ENCODE measurements at regions of chr9 and their contacts with region 1.

Region 1: DNA sequence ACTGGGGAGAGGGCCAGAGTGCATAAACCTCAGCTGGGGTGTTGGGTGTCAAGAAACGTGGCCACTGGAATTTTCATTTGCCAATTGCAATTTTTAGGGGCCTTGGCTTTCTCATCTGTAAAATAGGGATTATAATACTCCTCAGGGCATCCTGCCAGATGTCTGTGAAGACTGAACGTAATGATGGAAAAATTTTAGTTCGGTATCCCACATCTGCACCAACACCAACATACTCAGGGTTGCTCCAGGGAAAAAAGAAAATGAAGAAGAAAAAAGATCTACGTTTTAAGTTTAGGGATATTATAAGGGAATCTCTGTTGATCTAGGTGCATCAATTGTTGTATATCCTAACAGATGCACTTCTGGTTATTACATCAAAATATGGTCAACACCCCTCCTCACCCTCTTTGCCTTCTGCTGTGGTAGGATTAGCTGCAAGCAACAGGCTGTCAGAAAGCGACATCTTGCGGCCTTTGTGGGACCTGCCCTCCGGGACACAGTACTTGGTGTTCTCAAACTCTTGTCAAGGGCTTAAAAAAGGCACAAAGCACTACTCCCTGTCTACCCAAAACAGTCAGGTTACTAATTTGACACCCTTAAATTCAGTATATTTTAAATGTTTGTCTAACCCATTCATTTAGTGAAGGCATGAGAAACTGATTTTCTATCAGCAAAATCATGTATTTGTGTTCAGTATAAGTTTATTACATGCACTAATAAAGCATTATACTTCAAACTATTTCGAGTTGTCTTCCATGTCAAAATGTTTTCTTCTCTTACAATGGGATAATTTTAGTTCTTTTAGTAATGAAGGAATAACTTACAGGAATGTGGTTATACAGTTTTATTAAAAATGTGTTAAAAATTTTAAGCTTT is 8.3 kb upstream of the TBC1D2 start:
- DNase-seq: peak; percentile 91
- ATAC-seq: peak; percentile 99
- H3K4me3 Mint-ChIP-seq: no peak overlapping the region
- H3K27ac Mint-ChIP-seq: no peak overlapping the region
- H3K4me1 Mint-ChIP-seq: no peaks in the 10 kb centered on the region
- H3K27me3 Mint-ChIP-seq: no peaks in the 10 kb centered on the region

Region 2: GRCh38 chr9:98118640-98119601 is 144.8 kb before region 1 on chr9 and contains the start of gene TRIM14:
- CTCF ChIA-PET with region 1: interaction called, 4 read pairs
- POLR2A ChIA-PET with region 1: no interaction called
- intact Hi-C with region 1: loop called in 1 of 2 experiments (anchors 5 kb)
- DNase-seq: peak; percentile 79
- ATAC-seq: peak; percentile 49
- H3K4me3 Mint-ChIP-seq: peak within 1 kb of the TSS; percentile 75
- H3K27ac Mint-ChIP-seq: peak within 1 kb of the TSS; percentile 91
- H3K4me1 Mint-ChIP-seq: peaks cover 47% of the 10 kb centered on the region
- H3K27me3 Mint-ChIP-seq: no peaks in the 10 kb centered on the region
- total RNA-seq, gene TRIM14: 54.6 to 59.6 TPM

Region 3: GRCh38 chr9:98207606-98208005 is 56.1 kb before region 1 on chr9:
- CTCF ChIA-PET with region 1: interaction called, 32 read pairs
- POLR2A ChIA-PET with region 1: no interaction called
- intact Hi-C with region 1: loop called (anchors 1 kb)
- DNase-seq: no peak
- ATAC-seq: no peak
- H3K4me3 Mint-ChIP-seq: no peak overlapping the region
- H3K27ac Mint-ChIP-seq: no peak overlapping the region
- H3K4me1 Mint-ChIP-seq: peaks cover 2% of the 10 kb centered on the region
- H3K27me3 Mint-ChIP-seq: no peaks in the 10 kb centered on the region